OCI-LY7 (cell line): ENCODE measurements at regions of chr11 and their contacts with region 1.

Region 1: DNA sequence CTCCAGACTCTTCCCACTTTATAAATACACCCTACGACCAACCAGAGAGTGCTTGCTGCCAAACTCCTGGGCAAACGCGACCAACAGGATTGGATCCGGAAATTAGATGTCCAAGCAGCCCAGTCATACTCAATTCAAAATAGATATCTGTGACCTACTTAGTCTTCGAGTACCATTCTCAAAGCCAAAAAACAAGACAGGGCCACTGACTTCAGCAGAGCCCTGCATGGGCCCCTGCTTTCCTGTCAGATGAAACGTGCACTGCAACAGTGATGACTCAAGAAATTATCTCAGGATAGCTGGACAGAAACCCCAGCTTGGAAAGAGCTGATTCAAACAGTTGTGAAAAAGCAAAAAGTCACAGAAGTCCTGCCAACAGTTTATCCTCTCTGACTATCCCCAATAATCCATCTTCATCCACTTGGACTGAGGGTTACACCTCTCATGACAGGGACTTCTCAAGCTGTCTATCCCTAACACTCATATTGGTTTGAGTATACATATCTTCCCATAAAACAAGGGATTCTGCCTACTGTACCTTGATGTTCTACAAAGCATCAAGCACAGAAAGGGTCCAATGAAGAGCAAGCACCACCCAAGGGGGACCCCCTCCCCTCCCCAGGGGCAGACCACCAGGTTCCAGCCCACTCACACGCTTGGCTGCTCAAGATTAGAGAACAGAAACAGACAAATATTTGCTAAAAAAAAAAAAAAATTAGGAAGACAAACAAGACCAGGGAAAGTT is 17.4 kb downstream of the SMCO4 start:
- DNase-seq: peak; percentile 50
- H3K4me3 ChIP-seq: peak overlapping the region; percentile 56
- H3K27ac ChIP-seq: peak overlapping the region; percentile 71
- H3K4me1 ChIP-seq: peaks cover 82% of the 10 kb centered on the region
- CTCF ChIP-seq: no peak

Region 2: DNA sequence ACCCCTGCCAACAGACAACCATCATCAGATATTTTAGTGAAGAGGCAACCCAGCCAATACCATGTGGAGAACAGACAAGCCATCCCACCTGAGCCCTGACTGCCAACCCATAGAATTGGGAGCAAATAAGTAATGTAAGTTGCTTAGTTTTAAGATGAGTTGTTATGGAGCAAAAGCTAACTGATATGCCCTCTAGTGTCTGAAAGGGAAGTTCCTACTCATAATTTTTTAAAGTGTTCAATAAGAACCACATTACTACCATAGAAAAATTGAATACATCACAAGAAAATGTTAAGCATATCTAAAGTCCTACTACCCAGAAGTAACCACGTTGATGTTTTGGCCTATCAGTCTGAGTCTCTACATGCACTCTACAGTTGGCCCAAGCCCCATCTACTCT is 277.2 kb before region 1 on chr11:
- CTCF ChIA-PET with region 1: no interaction called
- POLR2A ChIA-PET with region 1: no interaction called
- intact Hi-C with region 1: no loop called
- DNase-seq: peak; percentile 23
- H3K4me3 ChIP-seq: no peak overlapping the region
- H3K27ac ChIP-seq: no peak overlapping the region
- H3K4me1 ChIP-seq: no peaks in the 10 kb centered on the region
- CTCF ChIP-seq: peak; percentile 72

Region 3: GRCh38 chr11:93410441-93410840 is 115.3 kb before region 1 on chr11:
- CTCF ChIA-PET with region 1: no interaction called
- POLR2A ChIA-PET with region 1: interaction called, 7 read pairs
- intact Hi-C with region 1: loop called (anchors 5 kb)
- DNase-seq: peak; percentile 70
- H3K4me3 ChIP-seq: peak overlapping the region; percentile 27
- H3K27ac ChIP-seq: peak overlapping the region; percentile 92
- H3K4me1 ChIP-seq: peaks cover 40% of the 10 kb centered on the region
- CTCF ChIP-seq: no peak

Region 4: GRCh38 chr11:93537049-93537448 is 11.3 kb after region 1 on chr11:
- CTCF ChIA-PET with region 1: interaction called, 5 read pairs
- POLR2A ChIA-PET with region 1: interaction called, 24 read pairs
- intact Hi-C with region 1: loop called (anchors 1 kb)
- DNase-seq: no peak
- H3K4me3 ChIP-seq: no peak overlapping the region
- H3K27ac ChIP-seq: no peak overlapping the region
- H3K4me1 ChIP-seq: peaks cover 31% of the 10 kb centered on the region
- CTCF ChIP-seq: no peak

Region 5: DNA sequence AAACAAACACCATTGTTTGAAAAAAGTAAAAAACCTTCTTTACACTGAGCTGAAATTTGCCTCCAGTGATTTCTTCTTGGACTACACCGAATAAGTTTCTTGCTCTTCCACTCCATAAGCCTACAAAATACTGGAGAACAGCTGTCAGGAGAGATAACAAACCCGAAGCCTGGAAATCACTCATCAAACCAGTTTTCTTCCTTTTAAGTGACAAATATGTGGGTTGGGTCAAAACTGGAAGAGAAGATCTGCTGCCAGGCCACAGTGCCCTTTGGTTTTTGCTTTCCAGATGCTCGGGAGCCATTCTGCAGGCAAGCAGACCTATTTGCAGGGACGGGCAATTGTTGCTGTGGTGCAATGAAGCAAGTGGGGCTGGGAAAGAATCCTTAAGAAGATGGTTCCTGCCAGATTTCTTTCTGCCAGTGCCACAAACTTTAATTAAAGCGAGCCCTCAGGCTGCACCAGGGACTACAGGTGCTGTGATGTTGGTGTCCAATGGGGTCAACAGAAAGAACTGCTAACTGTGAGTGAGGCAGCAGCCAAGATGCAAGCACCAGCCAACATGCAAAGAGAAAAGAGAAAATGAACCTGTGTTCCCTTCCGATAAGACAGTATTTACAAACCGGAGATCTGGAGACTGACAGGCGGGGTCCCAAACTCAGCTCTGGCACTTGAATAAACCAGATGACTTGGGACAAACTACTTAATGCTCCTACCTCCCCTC is 62.2 kb after region 1 on chr11:
- CTCF ChIA-PET with region 1: no interaction called
- POLR2A ChIA-PET with region 1: no interaction called
- intact Hi-C with region 1: no loop called
- DNase-seq: no peak
- H3K4me3 ChIP-seq: no peak overlapping the region
- H3K27ac ChIP-seq: no peak overlapping the region
- H3K4me1 ChIP-seq: no peaks in the 10 kb centered on the region
- CTCF ChIP-seq: no peak